AG04450 (cell line): ENCODE measurements at regions of chr6 and their contacts with region 1.

Region 1: GRCh38 chr6:17417817-17418216 is 24.4 kb downstream of the CAP2 start:
- DNase-seq: peak; percentile 75
- H3K4me3 ChIP-seq: peak overlapping the region; percentile 37
- H3K27ac ChIP-seq: peak overlapping the region; percentile 90
- H3K27me3 ChIP-seq: no peaks in the 10 kb centered on the region
- CTCF ChIP-seq: no peak

Region 2: GRCh38 chr6:17439243-17439993 is 21.6 kb after region 1 on chr6:
- CTCF ChIA-PET with region 1: no interaction called
- POLR2A ChIA-PET with region 1: no interaction called
- DNase-seq: no peak
- H3K4me3 ChIP-seq: no peak overlapping the region
- H3K27ac ChIP-seq: no peak overlapping the region
- H3K27me3 ChIP-seq: no peaks in the 10 kb centered on the region
- CTCF ChIP-seq: no peak

Region 3: DNA sequence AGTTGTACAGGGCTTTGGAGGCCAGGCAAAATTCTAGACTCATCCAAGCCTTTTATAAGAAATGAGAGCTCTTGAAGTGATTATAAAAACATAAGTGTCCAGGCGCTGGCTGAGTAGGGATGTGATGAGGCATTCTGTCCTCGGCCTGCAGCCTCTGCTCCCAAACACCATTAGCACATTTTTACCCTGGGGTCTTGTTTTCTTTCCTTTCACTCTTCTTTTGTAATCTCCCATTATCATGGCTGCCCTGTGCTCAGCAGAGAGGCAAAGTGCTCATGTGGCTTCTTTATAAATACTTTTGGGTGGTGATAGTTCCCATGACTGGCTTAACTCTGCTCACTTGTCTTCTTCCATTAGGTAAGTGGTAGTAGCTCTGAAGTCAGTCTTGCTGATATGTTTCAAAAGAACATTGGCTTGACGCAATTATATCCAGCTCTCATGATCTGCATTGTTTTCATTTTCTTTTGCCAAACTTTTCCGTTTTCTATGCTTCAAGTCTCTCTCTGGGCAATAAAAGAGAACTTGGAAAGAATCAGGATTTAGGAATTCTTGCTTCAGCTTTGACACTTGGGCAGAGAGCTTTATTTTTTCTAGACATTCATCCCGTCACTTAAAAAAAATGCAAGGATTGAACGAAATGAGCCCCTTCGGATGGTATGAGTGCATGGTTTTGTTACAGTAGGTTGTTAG is 36.6 kb after region 1 on chr6:
- CTCF ChIA-PET with region 1: no interaction called
- POLR2A ChIA-PET with region 1: interaction called, 11 read pairs
- DNase-seq: peak; percentile 57
- H3K4me3 ChIP-seq: no peak overlapping the region
- H3K27ac ChIP-seq: peak overlapping the region; percentile 73
- H3K27me3 ChIP-seq: no peaks in the 10 kb centered on the region
- CTCF ChIP-seq: no peak